ENCODE measurements at regions of chr19 and their contacts with region 1.

Region 1: DNA sequence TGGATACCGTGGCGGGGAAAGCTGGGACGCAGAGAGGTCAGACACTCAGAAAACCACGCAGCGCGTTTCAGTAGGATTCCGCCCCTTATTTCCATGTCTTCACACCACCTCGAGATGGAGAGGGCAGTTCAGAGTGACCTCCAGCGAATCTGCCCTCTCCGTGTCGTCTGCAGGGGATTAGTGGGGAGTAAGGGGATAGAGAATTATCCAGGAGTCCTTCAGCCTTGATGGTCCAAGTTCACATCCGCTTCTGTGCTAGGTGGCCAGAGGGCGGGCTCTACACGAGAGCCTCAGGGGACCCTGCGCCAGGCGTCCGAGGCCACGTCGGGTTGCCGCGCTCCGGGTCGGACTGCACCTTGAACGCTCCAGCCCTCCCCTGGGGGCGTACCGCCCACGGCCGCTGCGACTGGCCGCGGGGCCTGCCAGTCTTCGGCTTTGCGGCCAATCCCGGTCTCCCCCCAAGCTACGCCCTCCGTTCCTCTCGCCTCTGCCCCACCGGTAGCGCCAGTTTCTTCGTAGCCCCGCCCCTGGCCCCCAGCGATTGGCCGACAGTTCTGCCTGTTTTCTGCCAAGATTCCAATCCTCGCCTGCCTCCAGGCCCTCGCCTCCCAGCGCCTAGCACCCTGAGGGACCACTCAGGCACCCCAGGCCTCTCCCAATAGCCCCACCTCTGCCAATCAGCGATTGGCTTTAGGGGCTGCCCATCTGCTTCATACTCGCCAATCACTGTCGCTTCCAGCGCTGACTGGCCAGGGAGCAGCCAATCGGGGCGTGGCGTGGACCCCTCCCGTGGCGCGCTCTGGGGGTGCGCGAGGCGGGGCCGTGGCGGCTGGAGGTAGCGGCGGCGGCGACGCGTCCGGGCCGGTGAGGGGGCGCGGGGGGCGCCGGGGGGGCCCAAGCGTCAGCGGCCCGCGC is at the start of gene SLC25A42:
- DNase-seq: peak; percentile 100
- total RNA-seq, gene SLC25A42: 14.9 TPM

Region 2: DNA sequence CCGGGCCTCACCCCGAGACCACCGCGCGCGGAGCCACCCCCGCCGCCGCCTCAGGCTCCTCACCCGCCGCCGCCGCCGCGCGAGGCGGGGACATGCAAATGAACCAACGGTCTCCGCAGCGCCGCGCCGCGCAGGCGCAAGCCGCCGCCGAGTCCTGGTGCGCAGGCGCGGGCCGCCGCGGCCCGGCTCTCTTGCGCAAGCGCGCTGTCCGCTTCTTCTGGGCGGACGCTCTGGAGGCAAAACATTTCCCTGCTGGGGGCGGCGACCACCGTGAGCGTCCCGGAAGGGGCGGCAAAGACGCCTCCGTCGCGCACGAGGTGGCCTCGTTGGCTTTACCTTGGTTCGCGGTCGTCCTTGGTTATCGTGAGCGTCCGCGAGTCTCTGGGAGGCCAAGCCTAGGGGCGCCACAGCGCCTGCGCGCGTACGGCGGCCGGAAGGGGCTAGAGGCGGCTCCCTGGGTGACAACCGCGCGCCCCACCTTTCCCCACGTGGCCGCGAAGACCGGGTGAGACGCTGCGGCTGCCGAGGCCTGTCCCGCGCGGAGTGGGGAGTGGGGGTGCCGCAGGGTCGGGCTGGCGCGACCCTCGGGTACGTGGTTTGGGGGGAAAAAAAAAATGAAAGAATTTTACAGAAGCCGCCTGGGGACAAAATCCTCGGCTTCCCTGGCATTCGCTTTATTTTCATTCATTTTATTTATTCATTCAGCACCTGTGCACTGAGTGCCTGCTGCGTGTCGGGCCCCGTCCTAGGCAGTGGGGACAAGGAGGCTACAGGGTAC is 29.8 kb before region 1 on chr19 and contains the starts of genes ARMC6 and SUGP2:
- intact Hi-C with region 1: loop called (anchors 2 kb)
- DNase-seq: peak; percentile 94
- total RNA-seq, gene ARMC6: 15.9 TPM
- total RNA-seq, gene SUGP2: 60.4 TPM

Region 3: GRCh38 chr19:19081642-19082151 is 18.3 kb after region 1 on chr19:
- intact Hi-C with region 1: no loop called
- DNase-seq: no peak

Region 4: DNA sequence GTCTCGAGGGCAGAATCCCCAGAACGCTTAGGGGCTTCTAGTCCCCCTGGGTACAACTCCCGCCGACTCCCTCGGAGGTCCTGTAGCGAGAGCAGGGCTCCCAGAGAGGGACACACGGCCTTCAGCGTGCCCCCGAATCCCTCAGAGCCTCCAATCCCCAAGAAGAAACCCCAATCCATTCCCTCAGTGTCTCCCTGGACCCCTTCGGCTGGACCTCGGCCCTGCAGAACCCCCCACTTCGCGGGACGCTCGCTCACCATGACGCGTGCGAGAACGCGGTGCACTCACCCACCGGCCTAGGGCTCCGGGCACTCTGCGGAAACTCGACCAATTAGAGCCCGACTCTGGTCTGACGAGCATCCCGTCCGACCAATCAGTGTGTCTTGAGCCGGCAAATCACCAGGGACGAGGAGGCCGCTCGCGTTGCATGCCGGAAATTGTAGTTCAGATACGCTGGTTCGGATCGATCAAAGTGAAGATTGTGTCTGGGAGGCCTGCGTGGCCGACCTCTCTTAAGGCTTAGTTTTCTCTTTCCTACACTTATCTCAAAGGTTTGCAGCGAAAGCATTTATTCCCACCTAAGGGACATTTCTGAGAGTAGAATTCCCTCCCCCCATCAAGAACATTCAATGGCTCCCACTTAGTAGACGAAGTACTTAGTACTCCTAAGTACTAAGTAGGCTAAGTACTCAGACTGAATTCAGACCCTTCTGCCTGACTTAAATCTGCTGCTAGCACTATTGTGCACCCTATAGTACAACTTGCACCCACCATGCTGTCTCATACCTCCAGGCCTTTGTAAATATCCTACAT is 74.9 kb after region 1 on chr19 and contains the start of gene TMEM161A:
- intact Hi-C with region 1: loop called (anchors 5 kb)
- DNase-seq: peak; percentile 98
- total RNA-seq, gene TMEM161A: 12.2 TPM